ENCODE measurements at regions of chr18 and their contacts with region 1.

Region 1: DNA sequence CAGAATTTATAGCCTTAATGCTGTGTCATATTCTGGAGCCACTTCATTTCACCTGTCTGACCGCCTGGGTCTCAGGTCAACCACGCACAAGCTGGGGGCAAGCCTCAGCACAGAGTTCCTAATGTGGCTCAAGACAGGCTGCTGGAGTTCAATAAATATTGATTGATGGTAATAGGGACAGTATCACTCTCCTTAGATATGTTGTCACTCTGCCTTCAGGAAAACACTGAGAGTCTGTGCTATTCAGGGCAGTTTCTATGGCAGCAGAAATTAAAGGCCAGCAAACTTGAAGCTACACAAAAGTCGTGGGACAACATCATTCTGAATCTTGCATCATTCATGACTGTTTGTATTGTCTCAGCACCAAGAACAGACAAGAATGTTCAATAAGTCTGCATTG is 696.1 kb downstream of the METTL4 start:
- DNase-seq: no peak
- H3K4me3 ChIP-seq: no peak overlapping the region
- H3K4me3 Mint-ChIP-seq: no peak overlapping the region
- H3K27ac ChIP-seq: no peak overlapping the region
- H3K27ac Mint-ChIP-seq: no peak overlapping the region
- H3K4me1 ChIP-seq: no peaks in the 10 kb centered on the region
- H3K4me1 Mint-ChIP-seq: no peaks in the 10 kb centered on the region
- H3K27me3 ChIP-seq: no peaks in the 10 kb centered on the region
- H3K27me3 Mint-ChIP-seq: no peaks in the 10 kb centered on the region

Region 2: GRCh38 chr18:1766464-1766863 is 108.8 kb before region 1 on chr18:
- CTCF ChIA-PET with region 1: no interaction called
- POLR2A ChIA-PET with region 1: no interaction called
- intact Hi-C with region 1: no loop called
- DNase-seq: no peak
- H3K4me3 ChIP-seq: no peak overlapping the region
- H3K4me3 Mint-ChIP-seq: no peak overlapping the region
- H3K27ac ChIP-seq: no peak overlapping the region
- H3K27ac Mint-ChIP-seq: no peak overlapping the region
- H3K4me1 ChIP-seq: no peaks in the 10 kb centered on the region
- H3K4me1 Mint-ChIP-seq: peaks cover 0 to 2% (median 0%) of the 10 kb centered on the region in 4 donors
- H3K27me3 ChIP-seq: no peaks in the 10 kb centered on the region
- H3K27me3 Mint-ChIP-seq: no peaks in the 10 kb centered on the region

Region 3: GRCh38 chr18:1891626-1892025 is 16.4 kb after region 1 on chr18:
- CTCF ChIA-PET with region 1: no interaction called
- POLR2A ChIA-PET with region 1: no interaction called
- intact Hi-C with region 1: no loop called
- DNase-seq: no peak
- H3K4me3 ChIP-seq: no peak overlapping the region
- H3K4me3 Mint-ChIP-seq: no peak overlapping the region
- H3K27ac ChIP-seq: no peak overlapping the region
- H3K27ac Mint-ChIP-seq: no peak overlapping the region
- H3K4me1 ChIP-seq: no peaks in the 10 kb centered on the region
- H3K4me1 Mint-ChIP-seq: no peaks in the 10 kb centered on the region
- H3K27me3 ChIP-seq: no peaks in the 10 kb centered on the region
- H3K27me3 Mint-ChIP-seq: peaks cover 0 to 1% of the 10 kb centered on the region in 2 donors

Region 4: DNA sequence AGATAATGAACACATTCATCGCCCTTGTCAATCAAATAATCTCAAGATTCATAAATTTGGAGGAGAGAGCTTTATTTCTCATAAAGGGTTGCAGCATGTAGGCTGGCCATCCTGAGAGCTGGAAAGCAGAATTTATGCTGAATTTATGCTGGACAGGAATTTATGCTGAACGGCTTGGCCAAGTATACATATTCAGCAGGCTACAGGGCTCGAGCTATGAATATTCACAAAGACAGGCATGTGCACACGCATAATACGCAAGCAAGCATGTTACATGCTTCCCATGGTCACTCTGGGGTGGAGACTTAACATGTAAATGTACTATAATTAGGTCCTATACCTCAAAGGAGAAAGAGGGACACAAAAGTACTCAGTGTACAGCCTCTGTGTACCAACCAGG is 77.3 kb after region 1 on chr18:
- CTCF ChIA-PET with region 1: no interaction called
- POLR2A ChIA-PET with region 1: no interaction called
- intact Hi-C with region 1: loop called (anchors 2 kb)
- DNase-seq: no peak
- H3K4me3 ChIP-seq: no peak overlapping the region
- H3K4me3 Mint-ChIP-seq: no peak overlapping the region
- H3K27ac ChIP-seq: no peak overlapping the region
- H3K27ac Mint-ChIP-seq: no peak overlapping the region
- H3K4me1 ChIP-seq: no peaks in the 10 kb centered on the region
- H3K4me1 Mint-ChIP-seq: no peaks in the 10 kb centered on the region
- H3K27me3 ChIP-seq: no peaks in the 10 kb centered on the region
- H3K27me3 Mint-ChIP-seq: no peaks in the 10 kb centered on the region

Measured in CD4-positive, alpha-beta memory T cell (primary cell).